ENCODE measurements at regions of chr18 and their contacts with region 1.

Region 1: DNA sequence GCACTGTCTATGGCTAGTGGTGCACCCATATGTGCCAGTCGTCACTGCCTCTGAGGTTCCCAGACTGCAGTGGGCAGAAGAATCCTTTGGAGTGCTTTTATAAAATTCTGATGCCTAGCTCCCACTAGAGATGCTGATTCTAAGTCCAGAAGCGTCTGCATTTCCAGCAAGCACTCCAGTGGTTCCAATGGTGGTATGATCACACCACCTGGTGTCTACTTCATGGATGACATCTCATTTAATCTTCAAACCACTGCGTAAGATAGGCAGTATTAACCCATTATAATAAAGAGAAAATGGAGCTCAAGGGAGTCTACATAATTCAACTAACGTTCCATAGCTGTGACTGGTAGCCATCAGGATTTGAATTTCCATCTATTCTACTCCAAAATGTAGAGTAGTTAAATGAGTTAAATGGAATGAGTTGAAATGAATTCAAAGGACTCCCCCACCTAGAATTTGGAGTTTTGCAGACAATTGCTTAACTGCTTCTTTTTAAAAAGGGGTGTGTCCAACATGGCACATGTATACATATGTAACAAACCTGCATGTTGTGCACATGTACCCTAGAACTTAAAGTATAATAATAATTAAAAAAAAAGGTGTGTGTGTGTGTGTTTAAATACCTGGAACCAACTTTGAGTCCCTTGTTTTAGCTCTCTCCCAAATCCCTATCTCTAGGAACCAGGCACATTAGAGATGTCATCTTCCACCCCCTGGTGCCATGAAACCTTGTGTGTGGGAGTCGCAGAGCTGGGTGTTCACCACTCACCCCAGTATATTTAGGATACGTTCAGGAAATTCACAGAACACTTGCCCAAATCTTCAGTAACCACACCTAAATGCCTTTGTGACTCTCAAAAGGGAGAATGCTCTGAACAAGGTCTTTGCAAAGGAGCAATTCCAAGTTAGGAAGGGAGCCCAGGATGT is 14.1 kb downstream of the LAMA3 start:
- DNase-seq: no peak
- H3K4me3 ChIP-seq: no peak overlapping the region
- CTCF ChIP-seq: peak; percentile 43

Region 2: DNA sequence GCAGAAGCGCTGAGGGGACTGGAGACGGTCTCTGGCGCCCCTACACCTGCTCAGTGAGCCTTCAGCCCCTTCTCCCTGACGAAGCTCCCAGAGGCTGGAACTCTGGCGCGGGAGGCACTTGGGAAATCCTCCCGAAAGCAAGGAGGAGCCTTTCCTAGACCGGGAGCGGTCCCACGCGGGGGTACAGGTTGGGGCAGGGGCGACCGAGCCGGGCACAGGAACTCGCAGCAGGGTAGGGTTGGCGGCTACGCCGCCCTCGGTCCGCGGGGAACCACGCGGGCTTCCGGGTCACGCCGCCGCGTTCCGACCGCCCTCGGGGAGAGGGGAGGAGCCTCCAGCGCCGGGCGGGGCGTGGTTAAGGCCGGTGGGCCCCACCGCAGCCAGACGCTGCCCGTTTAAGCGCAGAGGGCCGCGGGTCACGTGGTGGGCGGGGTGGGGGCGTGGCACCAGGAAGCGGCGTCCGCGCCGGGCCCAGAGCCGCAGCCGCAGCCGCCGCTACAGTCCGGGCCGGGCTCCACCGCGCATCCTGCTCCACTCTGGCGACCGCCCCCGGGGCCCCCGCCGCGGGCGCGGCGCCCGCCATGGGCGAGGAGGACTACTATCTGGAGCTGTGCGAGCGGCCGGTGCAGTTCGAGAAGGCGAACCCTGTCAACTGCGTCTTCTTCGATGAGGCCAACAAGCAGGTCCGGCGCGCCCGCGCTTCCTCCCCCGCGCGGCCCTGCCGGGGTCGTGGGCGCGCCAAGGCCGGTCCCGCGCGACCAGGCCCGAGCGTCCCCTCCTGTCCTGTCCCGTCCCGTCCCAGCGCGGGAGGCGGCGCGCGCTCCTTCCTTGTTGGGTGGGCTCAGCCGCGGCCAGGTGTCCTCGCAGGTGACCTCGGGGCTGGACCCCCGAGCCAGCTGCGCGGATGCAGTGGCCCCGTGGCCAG is 200.0 kb before region 1 on chr18 and contains the start of gene RMC1:
- CTCF ChIA-PET with region 1: interaction called, 26 read pairs
- POLR2A ChIA-PET with region 1: no interaction called
- DNase-seq: peak; percentile 45
- H3K4me3 ChIP-seq: peak within 1 kb of the TSS; percentile 83
- CTCF ChIP-seq: no peak

Region 3: DNA sequence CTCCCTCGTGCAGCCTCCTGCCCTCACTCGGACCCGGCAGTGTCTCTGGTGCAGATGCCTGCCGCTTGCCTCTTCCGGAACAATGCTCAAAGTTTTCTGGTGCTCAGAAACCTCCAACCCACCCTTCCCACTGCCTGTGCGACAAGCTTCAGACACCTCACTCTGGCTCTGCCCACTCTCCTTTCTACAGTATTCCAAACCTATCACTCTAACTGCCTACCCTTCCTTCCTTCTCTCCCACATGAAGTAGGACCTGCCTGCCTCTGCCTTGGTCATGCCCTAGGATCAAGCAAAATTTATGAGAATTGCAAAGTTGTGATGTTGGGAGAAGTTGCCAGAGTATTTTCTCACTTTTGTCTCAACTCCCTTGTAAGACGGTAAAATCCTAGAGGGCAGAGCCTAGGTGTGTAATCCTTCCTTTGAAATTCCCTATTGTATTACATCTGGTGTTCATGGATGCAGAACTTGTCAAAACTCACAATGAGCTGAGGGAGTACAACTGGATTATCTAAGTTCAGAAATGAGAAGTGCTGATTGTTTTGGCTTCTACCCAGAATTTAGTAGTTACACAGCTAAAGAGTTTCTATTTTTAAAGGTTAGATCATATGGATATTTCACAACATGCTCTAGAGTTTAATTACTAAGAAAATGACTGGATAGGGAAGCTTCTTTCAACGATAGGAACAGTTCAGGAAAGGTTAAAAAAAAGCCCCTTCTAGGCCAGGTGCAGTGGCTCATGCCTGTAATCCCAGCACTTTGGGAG is 124.2 kb before region 1 on chr18:
- CTCF ChIA-PET with region 1: interaction called, 17 read pairs
- POLR2A ChIA-PET with region 1: no interaction called
- DNase-seq: no peak
- H3K4me3 ChIP-seq: no peak overlapping the region
- CTCF ChIP-seq: no peak

Region 4: DNA sequence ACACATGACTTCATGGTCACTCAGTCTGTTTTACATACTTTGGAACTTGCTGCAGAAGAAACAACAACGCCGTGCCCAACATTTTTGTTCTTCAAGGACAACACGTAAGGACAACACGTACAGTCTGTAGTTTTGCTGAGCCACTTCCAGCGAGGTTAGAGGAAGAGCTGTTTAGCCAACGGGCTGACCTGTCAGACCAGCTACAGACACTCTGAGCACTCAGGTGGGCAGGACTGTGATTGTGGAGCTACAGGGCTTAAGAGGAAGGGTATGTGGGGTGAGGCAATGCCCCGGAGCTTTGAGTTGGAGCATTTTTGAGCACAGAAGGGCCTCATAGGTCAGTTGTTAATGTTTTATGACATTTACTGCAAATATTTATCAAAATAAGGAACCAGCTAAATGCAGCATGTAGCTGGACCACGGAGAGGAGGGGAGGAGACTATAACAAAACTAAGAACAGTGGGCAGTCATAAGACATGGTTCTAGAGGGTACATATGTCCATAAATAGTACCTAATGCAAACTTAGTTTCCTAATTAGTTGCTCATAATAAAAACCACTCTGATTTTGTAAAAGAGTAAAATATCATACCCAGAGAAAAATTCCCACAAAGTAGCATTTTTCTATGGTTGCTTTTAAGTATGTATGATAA is 90.8 kb before region 1 on chr18:
- CTCF ChIA-PET with region 1: interaction called, 230 read pairs
- POLR2A ChIA-PET with region 1: no interaction called
- DNase-seq: no peak
- H3K4me3 ChIP-seq: no peak overlapping the region
- CTCF ChIP-seq: no peak

Region 5: GRCh38 chr18:23690505-23691068 is 12.7 kb before region 1 on chr18:
- CTCF ChIA-PET with region 1: interaction called, 18 read pairs
- POLR2A ChIA-PET with region 1: no interaction called
- DNase-seq: no peak
- H3K4me3 ChIP-seq: no peak overlapping the region
- CTCF ChIP-seq: no peak

Region 6: DNA sequence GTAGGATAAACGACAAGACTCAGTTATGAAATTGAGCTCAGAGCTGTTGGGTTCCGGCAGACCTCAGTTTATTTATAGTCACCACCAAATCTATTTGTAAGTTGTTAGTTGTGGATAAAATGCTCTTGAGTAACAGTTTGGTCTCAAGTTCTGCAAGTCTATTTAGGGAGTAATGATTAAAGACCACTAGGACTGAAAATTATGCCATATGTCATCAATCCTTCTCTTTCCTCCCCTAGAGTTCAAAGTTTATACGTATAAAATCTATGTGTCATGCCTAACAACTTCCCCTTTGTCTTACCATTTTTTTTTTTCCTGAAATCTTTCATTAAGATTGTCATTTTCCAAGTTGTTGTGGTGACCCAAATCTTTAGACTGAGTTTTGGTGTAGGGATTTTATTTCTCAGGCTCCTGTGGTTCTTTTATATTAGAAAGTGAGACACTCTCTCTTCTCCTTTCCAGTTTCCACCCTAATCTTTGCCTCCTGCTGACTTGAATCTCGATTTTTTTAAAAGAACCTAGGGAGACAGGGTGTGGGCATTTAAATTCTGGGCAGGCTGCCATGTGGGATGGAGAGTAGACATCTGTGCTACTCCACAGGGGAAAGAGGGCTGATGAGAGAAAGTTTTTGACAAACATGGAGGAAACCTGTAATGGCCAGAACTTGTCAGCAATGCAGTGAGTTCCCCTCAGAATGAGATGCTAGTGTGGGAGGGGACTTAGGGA is 36.9 kb after region 1 on chr18:
- CTCF ChIA-PET with region 1: no interaction called
- POLR2A ChIA-PET with region 1: no interaction called
- DNase-seq: no peak
- H3K4me3 ChIP-seq: no peak overlapping the region
- CTCF ChIP-seq: no peak

Region 7: GRCh38 chr18:23812546-23813440 is 109.5 kb after region 1 on chr18:
- CTCF ChIA-PET with region 1: interaction called, 43 read pairs
- POLR2A ChIA-PET with region 1: no interaction called
- DNase-seq: no peak
- H3K4me3 ChIP-seq: no peak overlapping the region
- CTCF ChIP-seq: peak; percentile 23